Activated CD4-positive, alpha-beta T cell treated with anti-CD3 and anti-CD28 coated beads, Interleukin-2, amount 10 ng/mL, durations not matched to agents 24 days and 14 days (primary cell): ENCODE measurements at regions of chr20 and their contacts with region 1.

Region 1: GRCh38 chr20:60262967-60263603 is 304.9 kb downstream of the CDH26 start:
- DNase-seq: peak; percentile 86
- H3K4me3 Mint-ChIP-seq: no peak overlapping the region
- H3K27ac Mint-ChIP-seq: no peak overlapping the region
- H3K4me1 Mint-ChIP-seq: peaks cover 3% of the 10 kb centered on the region
- H3K27me3 Mint-ChIP-seq: no peaks in the 10 kb centered on the region

Region 2: DNA sequence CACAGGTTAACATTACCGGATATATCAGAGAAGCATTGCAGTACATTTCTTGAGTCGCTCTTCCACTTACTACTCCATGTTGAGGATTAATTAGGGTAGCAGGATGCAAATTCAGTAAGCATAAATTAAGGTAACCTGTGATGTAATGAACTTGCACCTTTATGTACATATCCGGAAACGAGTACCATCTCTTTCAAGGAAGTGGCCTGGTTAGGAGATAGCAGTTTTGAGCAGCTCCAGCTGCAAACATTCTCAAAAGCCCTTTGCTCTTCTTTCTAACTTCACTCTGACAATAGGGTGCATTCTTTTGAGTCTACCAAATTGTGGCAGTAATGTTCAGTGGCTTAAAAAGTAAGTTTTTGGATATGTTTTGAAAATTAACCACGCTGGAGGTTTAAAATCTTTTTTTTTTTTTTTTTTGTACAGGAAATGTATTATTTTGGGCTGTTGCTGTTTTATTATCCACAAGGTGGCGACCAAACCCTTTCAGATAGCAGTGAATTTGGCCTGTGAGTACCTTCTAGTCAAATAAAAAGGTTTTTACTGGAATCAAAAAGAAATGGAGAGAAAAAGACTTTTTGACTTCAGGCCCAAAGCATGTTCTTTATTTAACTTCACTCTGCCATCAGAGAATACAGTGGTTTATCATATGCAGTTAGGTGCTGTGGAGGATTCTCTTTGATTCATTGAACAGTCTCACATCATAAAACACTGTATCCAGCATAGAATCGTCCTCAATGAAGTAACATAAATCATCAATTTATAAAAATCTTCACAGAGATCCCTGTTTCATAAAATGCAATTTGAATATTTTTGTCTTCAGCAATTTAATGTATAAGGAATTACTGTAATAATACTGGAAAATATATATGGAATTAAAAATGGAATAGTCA is 314.0 kb before region 1 on chr20:
- intact Hi-C with region 1: loop called (anchors 5 kb)
- DNase-seq: peak; percentile 82
- H3K4me3 Mint-ChIP-seq: peak overlapping the region; percentile 56
- H3K27ac Mint-ChIP-seq: peak overlapping the region; percentile 84
- H3K4me1 Mint-ChIP-seq: peaks cover 16% of the 10 kb centered on the region
- H3K27me3 Mint-ChIP-seq: no peaks in the 10 kb centered on the region

Region 3: GRCh38 chr20:60057123-60057801 is 205.8 kb before region 1 on chr20:
- intact Hi-C with region 1: loop called (anchors 1 kb)
- DNase-seq: peak; percentile 91
- H3K4me3 Mint-ChIP-seq: peak overlapping the region; percentile 76
- H3K27ac Mint-ChIP-seq: peak overlapping the region; percentile 88
- H3K4me1 Mint-ChIP-seq: peaks cover 34% of the 10 kb centered on the region
- H3K27me3 Mint-ChIP-seq: no peaks in the 10 kb centered on the region

Region 4: GRCh38 chr20:60137629-60138245 is 125.3 kb before region 1 on chr20:
- intact Hi-C with region 1: loop called (anchors 2 kb)
- DNase-seq: peak; percentile 77
- H3K4me3 Mint-ChIP-seq: peak overlapping the region; percentile 79
- H3K27ac Mint-ChIP-seq: no peak overlapping the region
- H3K4me1 Mint-ChIP-seq: peaks cover 6% of the 10 kb centered on the region
- H3K27me3 Mint-ChIP-seq: no peaks in the 10 kb centered on the region

Region 5: GRCh38 chr20:60210779-60211617 is 52.1 kb before region 1 on chr20:
- intact Hi-C with region 1: loop called (anchors 2 kb)
- DNase-seq: peak; percentile 87
- H3K4me3 Mint-ChIP-seq: no peak overlapping the region
- H3K27ac Mint-ChIP-seq: no peak overlapping the region
- H3K4me1 Mint-ChIP-seq: no peaks in the 10 kb centered on the region
- H3K27me3 Mint-ChIP-seq: no peaks in the 10 kb centered on the region